ENCODE measurements at regions of chr3 and their contacts with region 1.

Region 1: GRCh38 chr3:158434412-158435038 is 136.5 kb upstream of the MLF1 start:
- DNase-seq: peak; percentile 38 to 83 (median 63)
- H3K4me3 ChIP-seq: no peak overlapping the region
- H3K27ac ChIP-seq: no peak overlapping the region
- H3K4me1 ChIP-seq: no peaks in the 10 kb centered on the region
- H3K27me3 ChIP-seq: no peaks in the 10 kb centered on the region
- CTCF ChIP-seq: peak; percentile 47 to 85 (median 74)
- POLR2A ChIP-seq: no peak

Region 2: DNA sequence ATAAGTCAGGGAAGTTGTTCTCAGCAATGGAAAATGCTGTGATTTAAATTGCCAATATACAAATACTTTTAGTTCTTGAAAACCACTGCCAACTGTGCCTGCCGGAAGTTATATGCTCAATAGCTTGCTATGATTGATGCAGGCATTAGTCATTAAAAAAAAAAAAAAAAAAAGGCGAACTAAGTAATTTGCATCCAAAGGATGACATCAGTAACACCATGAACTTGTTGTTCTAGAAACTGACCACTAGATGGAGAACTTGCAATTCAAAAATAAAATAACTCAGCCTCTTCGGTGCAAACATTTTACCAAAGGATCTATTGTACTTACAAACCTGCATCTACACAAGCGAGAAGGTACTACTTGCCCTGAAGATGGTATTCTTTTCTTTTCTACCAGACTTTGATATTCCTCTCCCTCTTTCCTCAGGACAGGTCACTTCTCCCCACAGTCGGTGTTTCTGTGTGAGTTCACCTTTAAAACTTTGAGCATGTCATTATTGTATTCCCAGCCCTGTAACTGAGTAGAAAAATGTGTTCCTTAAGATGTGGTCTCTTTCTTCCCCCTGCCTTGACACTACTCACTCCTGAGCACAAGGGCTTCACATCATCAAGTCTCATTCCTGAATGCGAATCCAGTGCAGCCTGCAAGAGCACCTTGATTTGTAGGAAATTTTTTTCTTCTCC is 816.3 kb before region 1 on chr3:
- intact Hi-C with region 1: loop called (anchors 5 kb)
- DNase-seq: peak in 3 of 7 donors; percentile 10 to 39 (median 18)
- H3K4me3 ChIP-seq: no peak overlapping the region
- H3K27ac ChIP-seq: no peak overlapping the region
- H3K4me1 ChIP-seq: peaks cover 0 to 8% of the 10 kb centered on the region in 2 donors
- H3K27me3 ChIP-seq: peaks cover 5% of the 10 kb centered on the region
- CTCF ChIP-seq: peak; percentile 60 to 78 (median 70)
- POLR2A ChIP-seq: no peak

Region 3: GRCh38 chr3:158279609-158280008 is 154.9 kb before region 1 on chr3:
- intact Hi-C with region 1: no loop called
- DNase-seq: no peak
- H3K4me3 ChIP-seq: no peak overlapping the region
- H3K27ac ChIP-seq: no peak overlapping the region
- H3K4me1 ChIP-seq: no peaks in the 10 kb centered on the region
- H3K27me3 ChIP-seq: no peaks in the 10 kb centered on the region
- CTCF ChIP-seq: no peak
- POLR2A ChIP-seq: no peak

Measured in adrenal gland (tissue), 19 donors.